ENCODE measurements at regions of chr7 and their contacts with region 1.

Region 1: GRCh38 chr7:129218514-129219062 is 6.2 kb upstream of the AHCYL2 start:
- DNase-seq: peak; percentile 58
- H3K4me3 ChIP-seq: no peak overlapping the region
- H3K27ac ChIP-seq: no peak overlapping the region
- H3K27me3 ChIP-seq: no peaks in the 10 kb centered on the region
- CTCF ChIP-seq: peak; percentile 90

Region 2: GRCh38 chr7:129231666-129232065 is 13.1 kb after region 1 on chr7:
- CTCF ChIA-PET with region 1: interaction called, 17 read pairs
- POLR2A ChIA-PET with region 1: interaction called, 5 read pairs
- DNase-seq: no peak
- H3K4me3 ChIP-seq: no peak overlapping the region
- H3K27ac ChIP-seq: no peak overlapping the region
- H3K27me3 ChIP-seq: no peaks in the 10 kb centered on the region
- CTCF ChIP-seq: no peak

Region 3: GRCh38 chr7:129285111-129285510 is 66.5 kb after region 1 on chr7:
- CTCF ChIA-PET with region 1: interaction called, 13 read pairs
- POLR2A ChIA-PET with region 1: no interaction called
- DNase-seq: no peak
- H3K4me3 ChIP-seq: no peak overlapping the region
- H3K27ac ChIP-seq: no peak overlapping the region
- H3K27me3 ChIP-seq: no peaks in the 10 kb centered on the region
- CTCF ChIP-seq: no peak

Region 4: GRCh38 chr7:129332284-129333035 is 113.9 kb after region 1 on chr7:
- CTCF ChIA-PET with region 1: interaction called, 10 read pairs
- POLR2A ChIA-PET with region 1: no interaction called
- DNase-seq: peak; percentile 66
- H3K4me3 ChIP-seq: no peak overlapping the region; the same call in 1 of the 2 replicates
- H3K27ac ChIP-seq: peak overlapping the region; percentile 87
- H3K27me3 ChIP-seq: no peaks in the 10 kb centered on the region
- CTCF ChIP-seq: no peak

Region 5: DNA sequence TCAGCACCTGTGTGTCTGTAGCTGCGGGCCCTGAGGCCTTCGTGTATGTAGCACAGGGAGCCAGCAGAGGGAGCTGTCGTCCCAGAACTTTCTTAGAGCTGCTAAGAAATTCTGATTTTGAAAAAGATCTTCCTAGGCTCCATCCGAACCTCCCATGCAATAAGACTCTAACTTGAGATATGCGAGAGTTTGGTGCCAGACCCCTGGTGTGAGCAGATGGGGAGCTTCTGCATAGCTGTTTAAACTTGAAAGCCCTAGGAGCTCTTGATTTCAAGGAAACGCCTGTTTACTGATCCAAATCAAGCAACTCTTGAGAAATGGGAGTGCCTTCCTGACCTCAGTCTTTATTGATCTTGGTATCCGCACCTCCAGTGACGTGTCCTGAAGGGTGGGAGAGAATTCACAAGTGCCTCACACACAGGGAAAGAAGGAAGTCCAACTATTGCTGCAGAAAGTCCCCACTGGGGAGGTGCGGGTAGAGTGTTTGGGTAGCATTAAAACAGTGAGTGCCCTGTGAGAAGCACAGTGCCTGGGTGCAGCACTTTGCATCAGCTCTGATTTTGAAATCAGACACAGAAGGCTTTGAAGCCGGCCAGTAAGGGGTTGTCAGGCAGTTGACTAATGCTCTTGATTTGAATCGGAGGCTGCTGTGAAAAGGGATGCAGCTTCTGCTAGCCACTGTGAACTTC is 149.3 kb after region 1 on chr7:
- CTCF ChIA-PET with region 1: interaction called, 22 read pairs
- POLR2A ChIA-PET with region 1: no interaction called
- DNase-seq: no peak
- H3K4me3 ChIP-seq: no peak overlapping the region
- H3K27ac ChIP-seq: peak overlapping the region; percentile 3
- H3K27me3 ChIP-seq: no peaks in the 10 kb centered on the region
- CTCF ChIP-seq: peak; percentile 91

Region 6: GRCh38 chr7:129433847-129434674 is 215.5 kb after region 1 on chr7 and contains the start of gene STRIP2:
- CTCF ChIA-PET with region 1: interaction called, 12 read pairs
- POLR2A ChIA-PET with region 1: no interaction called
- DNase-seq: peak; percentile 15
- H3K4me3 ChIP-seq: peak within 1 kb of the TSS; percentile 78
- H3K27ac ChIP-seq: peak within 1 kb of the TSS; percentile 21
- H3K27me3 ChIP-seq: peaks cover 4% of the 10 kb centered on the region
- CTCF ChIP-seq: peak; percentile 15; the same call in 1 of the 2 replicates
- polyA plus RNA-seq, gene STRIP2: 1.3 and 1.7 TPM in 2 replicates

Region 7: DNA sequence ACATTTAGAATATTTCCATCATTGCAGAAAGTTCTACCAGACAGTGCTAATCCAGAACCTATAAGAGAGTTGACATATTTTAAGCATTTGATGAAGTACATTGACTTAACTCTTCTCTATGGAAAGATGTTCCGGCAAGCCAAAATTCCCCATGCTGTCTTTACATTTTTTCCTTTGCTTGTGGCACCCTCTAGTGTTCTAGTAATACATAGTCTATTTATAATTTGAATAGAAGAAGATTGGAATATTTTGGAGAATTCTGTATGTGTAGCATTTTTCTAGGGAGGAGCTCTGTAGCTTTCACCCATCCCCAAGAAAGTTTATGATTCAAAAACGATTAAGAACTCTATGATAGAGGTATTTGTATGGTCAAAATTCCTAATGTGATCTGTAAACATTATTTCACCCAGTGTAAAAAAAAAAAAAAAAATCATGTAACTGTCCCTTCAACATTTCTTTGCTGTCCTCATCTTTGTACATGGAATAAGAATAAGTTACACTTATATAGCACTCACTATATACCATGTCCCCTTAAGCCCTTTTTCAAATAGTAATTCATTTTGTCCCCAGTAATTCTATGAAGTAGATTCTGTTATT is 426.1 kb after region 1 on chr7:
- CTCF ChIA-PET with region 1: interaction called, 42 read pairs
- POLR2A ChIA-PET with region 1: no interaction called
- DNase-seq: peak; percentile 20
- H3K4me3 ChIP-seq: no peak overlapping the region
- H3K27ac ChIP-seq: no peak overlapping the region
- H3K27me3 ChIP-seq: no peaks in the 10 kb centered on the region
- CTCF ChIP-seq: peak; percentile 58

Measured in AG04450 (cell line).